ENCODE measurements at regions of chr20 and their contacts with region 1.

Region 1: GRCh38 chr20:4369798-4370124 is 351.9 kb upstream of the PRND start:
- DNase-seq: peak; percentile 21
- H3K4me3 Mint-ChIP-seq: no peak overlapping the region
- H3K27ac Mint-ChIP-seq: peak overlapping the region; percentile 87
- H3K4me1 Mint-ChIP-seq: peaks cover 46% of the 10 kb centered on the region
- H3K27me3 Mint-ChIP-seq: no peaks in the 10 kb centered on the region

Region 2: DNA sequence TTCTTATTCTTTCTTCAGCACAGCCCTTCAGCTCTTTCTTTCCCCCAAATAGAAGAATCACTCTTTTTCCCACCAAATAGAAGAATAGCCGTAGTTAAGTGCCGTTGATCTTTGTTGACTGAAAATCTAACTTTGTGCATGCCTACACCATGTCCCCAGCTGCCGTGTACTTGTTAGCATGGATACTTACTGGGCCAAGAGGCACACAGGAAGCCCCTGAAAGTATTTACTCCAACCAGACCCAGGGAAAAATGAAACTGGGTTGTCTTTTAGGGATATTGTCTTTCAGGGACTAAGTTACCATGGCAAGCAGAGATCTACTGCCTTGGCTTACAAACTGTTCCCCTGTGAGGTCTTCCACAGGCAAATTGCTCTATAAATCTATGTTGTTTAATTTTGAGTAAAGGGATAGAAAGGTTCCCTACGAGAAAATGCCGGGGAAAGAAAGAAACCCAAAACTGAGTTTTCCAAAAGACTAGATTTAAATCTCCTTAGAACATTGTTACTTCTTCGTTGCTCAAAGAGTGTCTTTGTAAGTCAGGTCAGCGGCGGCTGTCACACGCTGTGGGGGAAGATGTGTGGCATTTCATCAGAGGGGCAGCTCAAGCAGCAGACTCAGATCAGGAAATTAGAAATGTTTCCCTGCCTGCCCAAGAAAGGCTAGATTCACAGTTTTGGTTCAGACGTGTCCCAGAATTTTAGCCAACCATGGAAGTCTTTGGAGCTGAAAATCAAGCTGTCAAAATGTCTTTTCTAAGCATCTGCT is 163.8 kb after region 1 on chr20:
- intact Hi-C with region 1: no loop called
- DNase-seq: no peak
- H3K4me3 Mint-ChIP-seq: no peak overlapping the region
- H3K27ac Mint-ChIP-seq: no peak overlapping the region
- H3K4me1 Mint-ChIP-seq: no peaks in the 10 kb centered on the region
- H3K27me3 Mint-ChIP-seq: peaks cover 23% of the 10 kb centered on the region

Region 3: GRCh38 chr20:4666001-4666479 is 296.3 kb after region 1 on chr20:
- intact Hi-C with region 1: loop called (anchors 1 kb)
- DNase-seq: peak; percentile 66
- H3K4me3 Mint-ChIP-seq: peak overlapping the region; percentile 49
- H3K27ac Mint-ChIP-seq: peak overlapping the region; percentile 79
- H3K4me1 Mint-ChIP-seq: peaks cover 41% of the 10 kb centered on the region
- H3K27me3 Mint-ChIP-seq: no peaks in the 10 kb centered on the region